HEK293 (cell line): ENCODE measurements at regions of chr5 and their contacts with region 1.

Region 1: GRCh38 chr5:139560752-139561654 is at the start of gene UBE2D2:
- H3K4me3 ChIP-seq: peak within 1 kb of the TSS; percentile 95
- H3K27ac ChIP-seq: peak within 1 kb of the TSS; percentile 96
- H3K4me1 ChIP-seq: peaks cover 10% of the 10 kb centered on the region; the same call in 1 of the 2 replicates
- CTCF ChIP-seq: no peak

Region 2: GRCh38 chr5:139574641-139575312 is 13.8 kb after region 1 on chr5:
- CTCF ChIA-PET with region 1: interaction called, 22 read pairs
- POLR2A ChIA-PET with region 1: interaction called, 10 read pairs
- H3K4me3 ChIP-seq: no peak overlapping the region
- H3K27ac ChIP-seq: no peak overlapping the region
- H3K4me1 ChIP-seq: peaks cover 2% of the 10 kb centered on the region
- CTCF ChIP-seq: 0 out of 2 replicates have a peak, but pooled peaks have one; percentile 16

Region 3: GRCh38 chr5:140214831-140215230 is 653.8 kb after region 1 on chr5:
- CTCF ChIA-PET with region 1: no interaction called
- POLR2A ChIA-PET with region 1: no interaction called
- H3K4me3 ChIP-seq: no peak overlapping the region
- H3K27ac ChIP-seq: no peak overlapping the region
- H3K4me1 ChIP-seq: peaks cover 11% of the 10 kb centered on the region
- CTCF ChIP-seq: no peak